Naive thymus-derived CD4-positive, alpha-beta T cell (primary cell): ENCODE measurements at regions of chr1 and their contacts with region 1.

Region 1: DNA sequence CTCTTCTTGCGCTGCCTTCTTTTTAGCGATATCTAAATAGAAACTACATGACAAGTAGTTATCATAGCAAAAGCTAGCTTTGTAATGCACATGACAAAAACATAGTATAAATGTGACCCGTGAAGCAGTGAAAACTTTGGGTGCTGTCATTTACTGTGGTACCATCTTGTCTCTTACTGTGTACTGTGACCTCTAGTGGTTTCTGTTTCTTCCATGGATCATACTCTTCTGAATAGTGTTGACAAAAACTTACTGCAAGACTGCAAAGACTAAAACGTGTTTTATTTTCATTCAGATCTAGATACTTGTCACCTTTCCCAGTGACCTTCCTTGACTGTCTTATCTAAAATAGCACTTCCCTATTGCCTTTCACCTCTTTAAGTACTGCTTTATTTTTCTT is 6.1 kb downstream of the RLF start:
- DNase-seq: no peak
- ATAC-seq: no peak
- H3K4me3 ChIP-seq: no peak overlapping the region
- H3K4me3 Mint-ChIP-seq: peak overlapping the region in 3 of 10 donors; percentile 3 to 39 (median 12)
- H3K27ac ChIP-seq: no peak overlapping the region
- H3K27ac Mint-ChIP-seq: peak overlapping the region in 2 of 9 donors; percentile 7 to 73
- H3K4me1 ChIP-seq: peaks cover 30 to 32% of the 10 kb centered on the region in 2 donors
- H3K4me1 Mint-ChIP-seq: peaks cover 17 to 32% (median 21%) of the 10 kb centered on the region in 7 donors
- H3K27me3 ChIP-seq: no peaks in the 10 kb centered on the region
- H3K27me3 Mint-ChIP-seq: no peaks in the 10 kb centered on the region

Region 2: GRCh38 chr1:39754906-39755504 is 412.3 kb before region 1 on chr1:
- CTCF ChIA-PET with region 1: no interaction called
- POLR2A ChIA-PET with region 1: no interaction called
- intact Hi-C with region 1: no loop called
- DNase-seq: no peak
- ATAC-seq: no peak
- H3K4me3 ChIP-seq: no peak overlapping the region
- H3K4me3 Mint-ChIP-seq: no peak overlapping the region
- H3K27ac ChIP-seq: no peak overlapping the region
- H3K27ac Mint-ChIP-seq: no peak overlapping the region
- H3K4me1 ChIP-seq: no peaks in the 10 kb centered on the region
- H3K4me1 Mint-ChIP-seq: peaks cover 0 to 11% (median 0%) of the 10 kb centered on the region in 7 donors
- H3K27me3 ChIP-seq: no peaks in the 10 kb centered on the region
- H3K27me3 Mint-ChIP-seq: no peaks in the 10 kb centered on the region

Region 3: DNA sequence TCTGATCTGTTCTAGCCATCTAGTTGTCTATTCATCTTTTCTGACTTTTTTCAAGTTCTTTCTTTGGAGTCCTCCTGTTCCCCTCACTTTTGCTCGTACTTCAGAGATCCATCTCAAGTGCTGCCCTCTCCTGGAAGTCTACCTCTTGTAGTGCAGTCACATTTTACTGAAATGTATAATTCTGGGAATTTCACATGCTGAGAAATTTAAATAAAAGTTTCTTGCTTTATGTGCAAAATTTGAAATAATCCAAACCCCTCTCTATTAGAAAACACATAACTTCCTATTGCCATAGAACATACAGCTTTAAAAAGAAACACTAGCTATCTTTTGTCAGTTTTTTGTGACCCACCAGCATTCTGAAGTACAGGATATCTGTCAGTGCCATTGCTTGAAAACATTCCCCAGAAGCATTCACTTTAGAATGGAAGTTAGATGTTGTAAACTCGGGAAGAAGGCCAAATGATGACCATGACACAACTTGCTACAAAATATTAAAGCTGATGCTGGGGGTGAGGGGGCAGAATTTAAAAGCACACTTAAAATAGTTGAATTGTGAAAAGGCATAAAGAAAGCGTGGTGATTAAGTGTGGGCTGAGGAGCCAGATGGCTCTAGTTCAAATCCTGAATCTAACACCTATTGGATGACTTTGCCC is 15.9 kb after region 1 on chr1:
- CTCF ChIA-PET with region 1: no interaction called
- POLR2A ChIA-PET with region 1: interaction called, 7 read pairs
- intact Hi-C with region 1: loop called in 1 of 2 experiments (anchors 2 kb)
- DNase-seq: peak in 5 of 9 donors; percentile 11 to 30 (median 22)
- ATAC-seq: peak; percentile 47
- H3K4me3 ChIP-seq: no peak overlapping the region
- H3K4me3 Mint-ChIP-seq: peak overlapping the region in 3 of 10 donors; percentile 15 to 51 (median 39)
- H3K27ac ChIP-seq: no peak overlapping the region
- H3K27ac Mint-ChIP-seq: peak overlapping the region in 8 of 9 donors; percentile 0 to 69 (median 24)
- H3K4me1 ChIP-seq: peaks cover 9 to 16% of the 10 kb centered on the region in 2 donors
- H3K4me1 Mint-ChIP-seq: peaks cover 40 to 87% (median 69%) of the 10 kb centered on the region in 7 donors
- H3K27me3 ChIP-seq: no peaks in the 10 kb centered on the region
- H3K27me3 Mint-ChIP-seq: no peaks in the 10 kb centered on the region

Region 4: GRCh38 chr1:40305457-40305856 is 138.1 kb after region 1 on chr1:
- CTCF ChIA-PET with region 1: no interaction called
- POLR2A ChIA-PET with region 1: no interaction called
- intact Hi-C with region 1: no loop called
- DNase-seq: no peak
- ATAC-seq: no peak
- H3K4me3 ChIP-seq: no peak overlapping the region
- H3K4me3 Mint-ChIP-seq: no peak overlapping the region
- H3K27ac ChIP-seq: no peak overlapping the region
- H3K27ac Mint-ChIP-seq: no peak overlapping the region
- H3K4me1 ChIP-seq: no peaks in the 10 kb centered on the region
- H3K4me1 Mint-ChIP-seq: peaks cover 0 to under 1% (median 0%) of the 10 kb centered on the region in 7 donors
- H3K27me3 ChIP-seq: no peaks in the 10 kb centered on the region
- H3K27me3 Mint-ChIP-seq: no peaks in the 10 kb centered on the region